AG04449 (cell line): ENCODE measurements at regions of chr16 and their contacts with region 1.

Region 1: GRCh38 chr16:56401482-56401881 is 23.9 kb downstream of the AMFR start:
- DNase-seq: no peak
- H3K4me3 ChIP-seq: no peak overlapping the region
- CTCF ChIP-seq: peak; percentile 6

Region 2: DNA sequence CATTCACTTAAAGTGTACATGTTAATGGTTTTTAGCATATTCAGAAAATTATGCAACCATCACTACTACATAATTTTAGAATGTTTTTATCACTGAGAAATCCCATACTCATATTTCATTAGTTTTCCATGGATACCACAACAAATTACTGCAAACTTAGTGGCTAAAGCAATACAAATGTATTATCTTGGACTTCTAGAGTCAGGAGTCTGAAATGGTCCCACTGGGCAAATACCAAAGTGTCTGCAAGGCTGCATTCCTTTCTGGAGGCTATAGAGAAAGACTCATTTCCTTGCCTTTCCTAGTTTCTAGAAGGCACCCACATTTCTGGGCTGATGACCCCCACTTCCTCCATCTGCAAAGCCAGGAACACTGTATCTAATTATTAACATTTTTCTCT is 227.1 kb before region 1 on chr16:
- CTCF ChIA-PET with region 1: no interaction called
- POLR2A ChIA-PET with region 1: no interaction called
- DNase-seq: no peak
- H3K4me3 ChIP-seq: no peak overlapping the region
- CTCF ChIP-seq: no peak

Region 3: DNA sequence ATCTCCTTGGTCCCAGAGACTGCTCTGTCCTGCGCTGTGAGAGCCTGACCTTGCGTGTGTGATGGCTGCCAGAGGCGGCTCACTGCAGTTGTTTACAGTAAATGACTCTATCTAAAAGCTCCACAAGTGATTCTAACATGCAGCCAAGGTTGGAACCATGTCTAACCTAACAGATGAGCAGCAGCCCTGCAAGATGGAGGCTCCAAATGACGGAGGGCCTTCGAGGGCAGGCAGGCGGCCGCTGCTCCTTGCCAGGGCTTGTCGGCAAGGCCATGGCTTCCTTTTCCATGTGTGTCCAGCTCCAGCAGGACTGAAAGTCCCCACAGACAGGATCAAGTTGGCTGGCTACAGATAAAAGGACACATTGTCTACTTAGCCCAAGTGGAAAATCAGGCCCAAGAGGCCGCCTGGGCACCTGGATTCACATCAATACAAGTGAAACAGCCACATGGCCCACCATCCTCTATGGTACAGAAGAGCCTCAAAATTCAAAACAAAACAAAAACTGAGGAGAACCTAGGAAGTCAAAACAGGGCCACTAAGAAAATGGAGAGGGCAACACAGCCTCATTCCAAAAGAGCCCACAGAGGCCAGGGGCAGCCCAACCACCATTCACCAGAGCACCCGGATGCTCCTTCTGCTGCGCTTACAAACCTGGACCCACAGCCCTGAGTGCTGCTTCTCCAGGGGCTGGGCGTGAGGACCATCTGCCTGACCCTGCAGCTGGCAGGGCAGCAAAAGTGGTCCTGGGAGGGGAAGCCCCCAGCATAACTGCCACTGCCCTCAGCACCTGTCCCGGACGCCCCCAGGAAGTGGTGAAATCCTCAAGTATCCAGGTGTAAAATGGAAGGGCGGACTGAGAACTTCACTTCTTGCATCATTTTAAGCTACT is 41.1 kb before region 1 on chr16:
- CTCF ChIA-PET with region 1: no interaction called
- POLR2A ChIA-PET with region 1: no interaction called
- DNase-seq: no peak
- H3K4me3 ChIP-seq: no peak overlapping the region
- CTCF ChIP-seq: no peak

Region 4: DNA sequence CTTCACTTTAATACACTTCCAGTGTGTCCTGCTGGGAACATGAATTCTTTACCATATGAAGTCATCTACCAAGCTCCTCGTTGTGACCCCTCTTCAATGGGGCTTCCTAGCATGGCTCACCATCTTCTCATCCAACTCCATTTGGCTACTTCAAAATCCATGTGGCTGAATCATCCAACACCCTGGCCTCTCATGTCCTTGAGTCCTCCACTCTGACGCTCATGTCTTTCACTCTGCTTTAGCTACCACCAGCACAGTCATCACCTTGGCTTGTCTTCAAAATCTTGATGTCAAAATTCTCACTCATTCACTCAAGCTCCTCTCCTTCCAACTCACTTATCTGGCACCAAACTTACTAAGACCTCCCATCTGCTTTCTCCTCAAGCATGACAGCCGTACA is 11.9 kb before region 1 on chr16:
- CTCF ChIA-PET with region 1: interaction called, 12 read pairs
- POLR2A ChIA-PET with region 1: interaction called, 3 read pairs
- DNase-seq: peak; percentile 97
- H3K4me3 ChIP-seq: no peak overlapping the region
- CTCF ChIP-seq: no peak